ENCODE measurements at regions of chr3 and their contacts with region 1.

Region 1: GRCh38 chr3:55434789-55435188 is 52.3 kb downstream of the WNT5A start:
- DNase-seq: no peak
- ATAC-seq: no peak
- H3K4me3 ChIP-seq: no peak overlapping the region
- H3K27ac ChIP-seq: no peak overlapping the region
- H3K4me1 ChIP-seq: no peaks in the 10 kb centered on the region
- H3K27me3 ChIP-seq: peaks cover 0 to 15% (median 6%) of the 10 kb centered on the region in 7 donors
- CTCF ChIP-seq: peak in 4 of 9 donors; percentile 10 to 47 (median 26)

Region 2: DNA sequence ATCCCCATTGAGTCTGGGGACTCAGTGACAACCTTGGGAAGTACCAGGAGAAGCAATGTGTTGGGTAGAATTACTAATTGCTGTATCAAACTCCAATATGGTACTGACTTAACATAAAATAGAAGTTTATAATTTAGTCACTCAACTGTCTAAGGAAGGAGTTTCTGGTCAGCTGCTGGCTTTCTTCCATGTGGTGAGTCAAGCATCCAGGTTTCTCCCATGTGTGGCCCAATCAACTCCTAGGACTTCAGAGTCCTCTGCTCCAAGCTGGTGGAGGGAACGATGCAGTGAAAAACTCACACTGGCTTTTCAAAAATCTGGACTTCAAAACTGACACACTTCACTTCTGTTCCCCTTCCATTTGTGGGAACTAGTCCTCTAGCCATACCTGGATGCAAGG is 27.1 kb after region 1 on chr3:
- intact Hi-C with region 1: loop called in 1 of 10 experiments (anchors 2 kb)
- DNase-seq: no peak
- ATAC-seq: no peak
- H3K4me3 ChIP-seq: no peak overlapping the region
- H3K27ac ChIP-seq: no peak overlapping the region
- H3K4me1 ChIP-seq: no peaks in the 10 kb centered on the region
- H3K27me3 ChIP-seq: no peaks in the 10 kb centered on the region
- CTCF ChIP-seq: no peak